Mammary epithelial cell (primary cell): ENCODE measurements at regions of chr5 and their contacts with region 1.

Region 1: DNA sequence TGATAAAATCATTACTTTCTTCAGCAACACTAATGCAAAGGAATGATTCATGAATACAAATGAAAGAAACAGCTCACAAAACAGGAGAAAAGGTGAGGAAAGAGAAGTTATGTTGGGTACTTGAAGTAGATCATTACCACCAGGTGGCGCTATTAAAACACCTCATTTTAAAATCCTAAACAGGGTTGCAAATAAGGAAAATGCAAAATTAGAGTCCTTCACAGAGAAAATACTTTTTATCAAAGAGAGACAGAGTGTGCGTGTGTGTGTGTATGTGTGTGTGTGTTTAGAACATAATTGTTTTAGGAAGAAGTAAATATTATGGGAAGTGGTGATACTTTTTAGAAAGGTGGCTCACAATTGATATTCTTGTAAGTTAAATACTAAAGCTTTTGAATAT is 49.5 kb upstream of the CD180 start:
- DNase-seq: peak; percentile 66
- H3K4me3 ChIP-seq: no peak overlapping the region
- H3K27ac ChIP-seq: peak overlapping the region; percentile 30
- H3K4me1 ChIP-seq: peaks cover 46% of the 10 kb centered on the region
- H3K27me3 ChIP-seq: no peaks in the 10 kb centered on the region
- CTCF ChIP-seq: peak; percentile 50 to 61

Region 2: GRCh38 chr5:67315082-67315989 is 69.2 kb after region 1 on chr5:
- CTCF ChIA-PET with region 1: interaction called, 4 read pairs
- dilution Hi-C with region 1: no loop called
- in situ Hi-C with region 1: no loop called
- intact Hi-C with region 1: loop called (anchors 5 kb)
- DNase-seq: peak; percentile 76
- H3K4me3 ChIP-seq: peak overlapping the region in 1 of 3 experiments; percentile 20
- H3K27ac ChIP-seq: peak overlapping the region; percentile 56
- H3K4me1 ChIP-seq: peaks cover 20% of the 10 kb centered on the region
- H3K27me3 ChIP-seq: no peaks in the 10 kb centered on the region
- CTCF ChIP-seq: no peak

Region 3: GRCh38 chr5:67493676-67494075 is 247.6 kb after region 1 on chr5:
- CTCF ChIA-PET with region 1: interaction called, 4 read pairs
- dilution Hi-C with region 1: no loop called
- in situ Hi-C with region 1: loop called in 1 of 2 experiments (anchors 25 kb)
- intact Hi-C with region 1: loop called (anchors 1 kb)
- DNase-seq: peak; percentile 31
- H3K4me3 ChIP-seq: no peak overlapping the region
- H3K27ac ChIP-seq: no peak overlapping the region
- H3K4me1 ChIP-seq: no peaks in the 10 kb centered on the region
- H3K27me3 ChIP-seq: no peaks in the 10 kb centered on the region
- CTCF ChIP-seq: peak; percentile 19 to 62

Region 4: DNA sequence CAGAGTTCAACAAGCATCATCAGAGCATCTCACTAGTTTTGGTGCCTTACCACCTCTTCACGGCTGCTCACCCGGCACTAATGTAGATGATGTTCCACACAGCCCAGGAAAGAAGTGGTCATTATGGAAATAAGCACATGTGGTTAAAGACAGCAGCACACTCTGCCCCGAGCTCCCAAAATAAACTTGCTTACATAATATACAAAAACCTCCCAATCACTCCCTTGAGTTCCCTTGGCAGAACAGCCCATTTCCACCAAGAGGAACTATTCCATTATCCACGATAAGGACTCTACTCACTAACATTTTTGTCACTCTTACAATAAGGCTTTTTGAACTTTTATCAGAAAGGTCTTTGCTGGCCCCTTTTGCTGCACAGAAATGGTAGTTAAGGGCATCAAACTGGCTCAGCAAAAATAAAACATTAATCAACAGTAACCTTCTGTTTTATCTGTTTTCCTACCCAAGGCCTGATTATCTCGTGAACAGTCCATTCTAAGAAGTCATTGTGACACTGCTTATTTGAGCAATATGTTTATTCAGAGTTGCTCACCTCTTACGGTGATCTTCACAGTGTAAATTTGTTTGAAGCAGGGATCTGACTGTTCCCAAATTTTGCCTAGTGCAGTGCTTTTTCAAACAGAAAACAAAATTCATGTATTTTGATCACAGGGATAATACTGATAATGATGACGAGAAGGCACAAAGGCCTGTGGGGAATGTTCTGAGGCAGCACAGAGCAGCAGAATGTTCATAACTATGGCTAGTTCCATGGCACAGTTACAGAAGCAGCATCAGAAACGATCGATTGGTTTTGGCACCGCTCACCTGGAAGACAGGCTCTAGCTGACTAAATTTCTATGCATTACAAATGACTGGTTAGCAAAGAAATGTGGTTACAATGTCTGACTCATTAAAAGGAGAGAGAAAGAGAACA is 569.6 kb after region 1 on chr5:
- CTCF ChIA-PET with region 1: no interaction called
- dilution Hi-C with region 1: no loop called
- in situ Hi-C with region 1: no loop called
- intact Hi-C with region 1: loop called (anchors 10 kb)
- DNase-seq: peak; percentile 78
- H3K4me3 ChIP-seq: no peak overlapping the region
- H3K27ac ChIP-seq: peak overlapping the region; percentile 36
- H3K4me1 ChIP-seq: peaks cover 22% of the 10 kb centered on the region
- H3K27me3 ChIP-seq: no peaks in the 10 kb centered on the region
- CTCF ChIP-seq: no peak

Region 5: GRCh38 chr5:68046445-68046844 is 800.3 kb after region 1 on chr5:
- CTCF ChIA-PET with region 1: no interaction called
- dilution Hi-C with region 1: no loop called
- in situ Hi-C with region 1: no loop called
- intact Hi-C with region 1: loop called (anchors 5 kb)
- DNase-seq: peak; percentile 96
- H3K4me3 ChIP-seq: no peak overlapping the region
- H3K27ac ChIP-seq: no peak overlapping the region
- H3K4me1 ChIP-seq: peaks cover 7% of the 10 kb centered on the region
- H3K27me3 ChIP-seq: no peaks in the 10 kb centered on the region
- CTCF ChIP-seq: no peak

Region 6: GRCh38 chr5:68272289-68272688 is 1026.2 kb after region 1 on chr5:
- CTCF ChIA-PET with region 1: interaction called, 3 read pairs
- dilution Hi-C with region 1: no loop called
- in situ Hi-C with region 1: loop called in 1 of 2 experiments (anchors 25 kb)
- intact Hi-C with region 1: loop called (anchors 1 kb)
- DNase-seq: no peak
- H3K4me3 ChIP-seq: no peak overlapping the region
- H3K27ac ChIP-seq: no peak overlapping the region
- H3K4me1 ChIP-seq: peaks cover 63% of the 10 kb centered on the region
- H3K27me3 ChIP-seq: no peaks in the 10 kb centered on the region
- CTCF ChIP-seq: peak; percentile 22 to 27